Activated CD8-positive, alpha-beta T cell treated with anti-CD3 and anti-CD28 coated beads, Interleukin-2, amount 10 ng/mL, durations not matched to agents 7 days and 5 days (primary cell): ENCODE measurements at regions of chr1 and their contacts with region 1.

Region 1: GRCh38 chr1:33633019-33633801 is 160.8 kb downstream of the ZSCAN20 start:
- DNase-seq: peak; percentile 93
- ATAC-seq: peak; percentile 96
- H3K4me3 Mint-ChIP-seq: no peak overlapping the region
- H3K27ac Mint-ChIP-seq: no peak overlapping the region
- H3K4me1 Mint-ChIP-seq: no peaks in the 10 kb centered on the region
- H3K27me3 Mint-ChIP-seq: peaks cover 30% of the 10 kb centered on the region

Region 2: GRCh38 chr1:33616773-33617172 is 16.4 kb before region 1 on chr1:
- CTCF ChIA-PET with region 1: interaction called, 13 read pairs
- POLR2A ChIA-PET with region 1: no interaction called
- DNase-seq: no peak
- ATAC-seq: no peak
- H3K4me3 Mint-ChIP-seq: no peak overlapping the region
- H3K27ac Mint-ChIP-seq: no peak overlapping the region
- H3K4me1 Mint-ChIP-seq: peaks cover 8% of the 10 kb centered on the region
- H3K27me3 Mint-ChIP-seq: peaks cover 20% of the 10 kb centered on the region

Region 3: GRCh38 chr1:34013958-34014737 is 380.9 kb after region 1 on chr1:
- CTCF ChIA-PET with region 1: interaction called, 12 read pairs
- POLR2A ChIA-PET with region 1: no interaction called
- DNase-seq: peak; percentile 22
- ATAC-seq: no peak
- H3K4me3 Mint-ChIP-seq: no peak overlapping the region
- H3K27ac Mint-ChIP-seq: no peak overlapping the region
- H3K4me1 Mint-ChIP-seq: no peaks in the 10 kb centered on the region
- H3K27me3 Mint-ChIP-seq: no peaks in the 10 kb centered on the region

Region 4: GRCh38 chr1:34162852-34163766 is 529.9 kb after region 1 on chr1:
- CTCF ChIA-PET with region 1: interaction called, 16 read pairs
- POLR2A ChIA-PET with region 1: no interaction called
- DNase-seq: peak; percentile 30
- ATAC-seq: peak; percentile 74
- H3K4me3 Mint-ChIP-seq: peak overlapping the region; percentile 53
- H3K27ac Mint-ChIP-seq: no peak overlapping the region
- H3K4me1 Mint-ChIP-seq: peaks cover 12% of the 10 kb centered on the region
- H3K27me3 Mint-ChIP-seq: peaks cover 51% of the 10 kb centered on the region

Region 5: DNA sequence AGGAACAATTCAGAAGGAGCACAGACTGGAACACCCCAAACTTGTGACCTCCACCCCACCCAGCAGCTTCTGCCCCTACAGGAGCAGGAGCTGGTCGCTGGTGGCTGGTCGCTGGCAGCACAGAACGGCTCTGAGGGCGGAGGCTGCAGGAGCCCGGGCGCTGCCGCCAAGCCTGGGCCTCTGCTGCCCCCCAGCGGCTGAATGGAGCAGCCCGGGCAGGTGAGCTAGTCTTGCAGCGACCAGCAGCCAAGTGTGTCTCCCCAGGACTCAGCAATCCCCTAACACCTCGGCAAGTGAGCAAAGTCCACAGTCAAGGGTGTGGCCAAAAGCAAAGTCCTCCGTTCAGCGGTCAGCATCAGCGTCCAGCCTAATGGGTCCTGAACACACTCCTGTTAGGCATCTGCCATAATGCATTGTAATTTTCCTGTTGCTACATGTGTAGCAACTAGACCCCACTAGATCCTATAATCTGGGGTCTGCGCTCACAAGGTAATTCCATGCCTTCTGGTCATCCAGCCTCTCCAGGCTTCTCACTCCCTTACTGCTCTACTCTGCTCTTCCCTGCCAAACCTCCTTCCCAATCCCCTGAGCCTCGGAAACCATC is 1109.6 kb after region 1 on chr1:
- CTCF ChIA-PET with region 1: interaction called, 16 read pairs
- POLR2A ChIA-PET with region 1: no interaction called
- DNase-seq: peak; percentile 80
- ATAC-seq: peak; percentile 98
- H3K4me3 Mint-ChIP-seq: no peak overlapping the region
- H3K27ac Mint-ChIP-seq: no peak overlapping the region
- H3K4me1 Mint-ChIP-seq: no peaks in the 10 kb centered on the region
- H3K27me3 Mint-ChIP-seq: peaks cover 3% of the 10 kb centered on the region